ENCODE measurements at regions of chr10 and their contacts with region 1.

Region 1: DNA sequence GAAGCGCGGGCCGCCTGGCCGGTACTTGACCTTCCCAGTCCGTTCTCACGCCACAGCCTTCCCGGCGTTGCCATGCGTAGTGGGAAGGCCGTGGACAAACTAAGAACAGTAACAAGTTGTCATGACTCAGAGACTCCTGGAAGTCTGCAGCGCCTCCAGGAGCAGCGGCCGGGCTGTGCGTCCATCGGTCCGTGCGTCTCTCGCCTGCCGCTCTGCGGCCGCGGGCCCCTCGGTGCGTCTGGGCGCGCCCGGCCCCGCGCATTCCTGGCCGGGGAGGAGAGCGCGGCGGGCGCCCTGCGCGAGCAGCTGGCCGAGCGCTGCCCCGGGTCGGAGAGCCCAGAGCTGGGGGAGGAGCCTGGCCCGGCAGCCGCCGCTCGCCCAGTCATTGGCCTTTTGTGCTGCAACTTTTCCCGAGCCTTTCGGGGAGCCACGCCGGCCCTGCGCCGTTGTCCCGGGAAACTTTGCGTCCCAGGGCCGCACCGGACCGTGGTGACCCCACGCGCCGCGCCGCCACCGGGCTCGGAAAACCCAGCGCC is 123.7 kb downstream of the TACC2 start:
- DNase-seq: peak; percentile 81 to 90 (median 89)
- ATAC-seq: peak; percentile 89
- H3K4me3 ChIP-seq: peak overlapping the region; percentile 51
- H3K4me1 ChIP-seq: peaks cover 5% of the 10 kb centered on the region
- CTCF ChIP-seq: peak; percentile 31

Region 2: DNA sequence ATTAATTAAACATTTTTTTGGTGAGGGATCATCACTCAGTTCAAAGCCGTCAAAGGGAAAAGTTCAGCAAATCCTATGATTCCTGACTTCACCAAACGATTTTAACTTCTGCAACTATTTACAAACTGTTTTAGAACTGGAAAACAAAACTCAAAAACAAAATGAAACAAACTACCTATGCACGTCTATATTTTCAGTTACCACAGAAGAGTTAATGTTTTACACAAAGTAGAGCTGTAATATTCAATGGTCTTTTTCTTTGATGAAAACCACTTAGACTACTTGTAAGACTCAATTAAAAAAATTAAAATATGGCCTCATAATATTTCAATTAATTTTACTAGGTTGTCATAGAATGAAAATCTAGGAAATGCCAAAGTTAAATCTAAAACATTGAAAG is 316.4 kb before region 1 on chr10:
- intact Hi-C with region 1: no loop called
- DNase-seq: no peak
- ATAC-seq: no peak
- H3K4me3 ChIP-seq: no peak overlapping the region
- H3K4me1 ChIP-seq: no peaks in the 10 kb centered on the region
- CTCF ChIP-seq: no peak

Region 3: DNA sequence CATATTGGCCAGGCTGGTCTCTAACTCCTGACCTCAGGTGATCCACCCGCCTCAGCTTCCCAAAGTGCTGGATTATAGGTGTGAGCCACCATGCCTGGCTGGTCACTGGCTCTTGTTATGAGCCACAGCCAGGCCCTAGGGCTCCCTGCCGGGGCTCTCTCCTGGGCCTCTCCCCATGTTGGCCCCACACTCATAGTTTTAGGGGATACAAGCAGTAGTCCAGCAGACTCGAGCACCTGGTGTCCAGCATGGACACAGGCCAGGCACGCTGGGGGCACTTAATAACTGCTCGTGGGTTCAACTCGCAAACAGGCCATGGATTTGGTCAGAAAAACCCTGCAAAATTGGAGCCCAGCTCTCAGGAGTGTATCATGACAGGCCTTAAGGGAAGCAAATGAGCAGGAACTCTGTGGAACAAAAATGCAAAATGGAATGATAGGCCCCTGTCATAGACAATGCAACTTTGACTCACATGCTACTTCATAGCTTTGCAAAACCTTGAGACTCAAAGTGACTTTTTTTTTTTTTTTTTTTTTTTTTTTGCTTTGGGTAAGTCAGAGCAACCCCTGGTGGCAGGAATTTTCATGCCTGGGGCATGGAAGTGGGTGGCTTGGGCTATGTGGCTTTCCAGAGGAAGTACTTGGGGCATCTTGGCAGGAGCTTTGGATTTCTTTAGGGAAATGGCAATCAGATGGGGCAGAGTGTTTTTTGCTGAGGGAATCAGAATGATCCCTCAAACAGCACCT is 61.3 kb before region 1 on chr10:
- intact Hi-C with region 1: loop called in 1 of 2 experiments (anchors 10 kb)
- DNase-seq: peak in 2 of 3 donors; percentile 68 to 85
- ATAC-seq: peak; percentile 64
- H3K4me3 ChIP-seq: no peak overlapping the region
- H3K4me1 ChIP-seq: peaks cover 6% of the 10 kb centered on the region
- CTCF ChIP-seq: peak; percentile 44

Region 4: GRCh38 chr10:122206471-122207065 is 93.9 kb after region 1 on chr10:
- intact Hi-C with region 1: no loop called
- DNase-seq: no peak
- ATAC-seq: peak; percentile 12
- H3K4me3 ChIP-seq: no peak overlapping the region
- H3K4me1 ChIP-seq: no peaks in the 10 kb centered on the region
- CTCF ChIP-seq: no peak